Caco-2 (cell line): ENCODE measurements at regions of chr1 and their contacts with region 1.

Region 1: GRCh38 chr1:17045634-17046333 is 8.0 kb downstream of the SDHB start:
- DNase-seq: peak in 1 of 2 experiments; percentile 25
- H3K4me3 ChIP-seq: no peak overlapping the region
- H3K4me3 Mint-ChIP-seq: no peak overlapping the region
- H3K27ac Mint-ChIP-seq: no peak overlapping the region
- H3K4me1 ChIP-seq: 0 out of 2 replicates have a peak, but pooled peaks cover 4% of the 10 kb centered on the region
- H3K4me1 Mint-ChIP-seq: no peaks in the 10 kb centered on the region
- H3K27me3 ChIP-seq: no peaks in the 10 kb centered on the region
- H3K27me3 Mint-ChIP-seq: no peaks in the 10 kb centered on the region
- CTCF ChIP-seq: peak; percentile 41 to 55

Region 2: GRCh38 chr1:16946646-16947045 is 99.1 kb before region 1 on chr1:
- CTCF ChIA-PET with region 1: interaction called, 5 read pairs
- POLR2A ChIA-PET with region 1: no interaction called
- intact Hi-C with region 1: loop called (anchors 1 kb)
- DNase-seq: no peak
- H3K4me3 ChIP-seq: no peak overlapping the region
- H3K4me3 Mint-ChIP-seq: no peak overlapping the region
- H3K27ac Mint-ChIP-seq: no peak overlapping the region
- H3K4me1 ChIP-seq: no peaks in the 10 kb centered on the region
- H3K4me1 Mint-ChIP-seq: no peaks in the 10 kb centered on the region
- H3K27me3 ChIP-seq: no peaks in the 10 kb centered on the region
- H3K27me3 Mint-ChIP-seq: no peaks in the 10 kb centered on the region
- CTCF ChIP-seq: no peak